ENCODE measurements at regions of chr1 and their contacts with region 1.

Region 1: GRCh38 chr1:105608713-105609112 is 1447.8 kb upstream of the PRMT6 start:
- DNase-seq: peak; percentile 4
- ATAC-seq: peak; percentile 63
- H3K4me3 ChIP-seq: no peak overlapping the region
- H3K27ac ChIP-seq: no peak overlapping the region
- H3K4me1 ChIP-seq: no peaks in the 10 kb centered on the region
- H3K27me3 ChIP-seq: no peaks in the 10 kb centered on the region
- CTCF ChIP-seq: peak; percentile 38
- EP300 ChIP-seq: no peak
- POLR2A ChIP-seq: no peak
- RAD21 ChIP-seq: no peak

Region 2: GRCh38 chr1:104780470-104781078 is 828.1 kb before region 1 on chr1:
- CTCF ChIA-PET with region 1: no interaction called
- POLR2A ChIA-PET with region 1: no interaction called
- in situ Hi-C with region 1: no loop called
- intact Hi-C with region 1: loop called (anchors 5 kb)
- DNase-seq: peak; percentile 19
- ATAC-seq: no peak
- H3K4me3 ChIP-seq: no peak overlapping the region
- H3K27ac ChIP-seq: no peak overlapping the region
- H3K4me1 ChIP-seq: no peaks in the 10 kb centered on the region
- H3K27me3 ChIP-seq: no peaks in the 10 kb centered on the region
- CTCF ChIP-seq: peak; percentile 73
- EP300 ChIP-seq: no peak
- POLR2A ChIP-seq: no peak
- RAD21 ChIP-seq: peak; percentile 42